ENCODE measurements at regions of chr11 and their contacts with region 1.

Region 1: DNA sequence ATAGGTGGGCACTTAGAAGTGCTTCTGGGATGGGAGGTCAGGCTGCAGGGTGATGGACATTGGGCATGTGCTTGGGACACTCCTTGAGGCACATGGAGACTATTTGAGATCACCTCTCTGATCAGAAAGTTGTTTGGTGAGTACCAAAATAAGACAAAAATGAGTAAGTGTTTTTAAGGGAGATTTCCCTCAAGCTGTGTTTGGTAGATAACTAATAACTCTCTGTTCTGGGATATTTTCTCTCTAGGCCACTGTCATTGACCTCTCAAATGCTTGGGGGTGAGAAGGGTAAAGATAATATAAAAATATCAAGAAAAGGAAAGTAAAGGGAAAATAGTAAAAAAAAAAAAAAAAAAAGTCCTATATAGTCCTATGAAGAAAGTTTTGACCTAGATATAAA is 117.8 kb downstream of the TEAD1 start:
- DNase-seq: no peak
- H3K4me3 ChIP-seq: no peak overlapping the region
- H3K27ac ChIP-seq: no peak overlapping the region
- H3K4me1 ChIP-seq: peaks cover 4% of the 10 kb centered on the region
- H3K27me3 ChIP-seq: no peaks in the 10 kb centered on the region
- CTCF ChIP-seq: no peak

Region 2: GRCh38 chr11:12768726-12769673 is 23.0 kb before region 1 on chr11:
- CTCF ChIA-PET with region 1: no interaction called
- POLR2A ChIA-PET with region 1: interaction called, 10 read pairs
- intact Hi-C with region 1: no loop called
- DNase-seq: no peak
- H3K4me3 ChIP-seq: no peak overlapping the region
- H3K27ac ChIP-seq: peak overlapping the region; percentile 55
- H3K4me1 ChIP-seq: peaks cover 45% of the 10 kb centered on the region
- H3K27me3 ChIP-seq: no peaks in the 10 kb centered on the region
- CTCF ChIP-seq: no peak

Region 3: DNA sequence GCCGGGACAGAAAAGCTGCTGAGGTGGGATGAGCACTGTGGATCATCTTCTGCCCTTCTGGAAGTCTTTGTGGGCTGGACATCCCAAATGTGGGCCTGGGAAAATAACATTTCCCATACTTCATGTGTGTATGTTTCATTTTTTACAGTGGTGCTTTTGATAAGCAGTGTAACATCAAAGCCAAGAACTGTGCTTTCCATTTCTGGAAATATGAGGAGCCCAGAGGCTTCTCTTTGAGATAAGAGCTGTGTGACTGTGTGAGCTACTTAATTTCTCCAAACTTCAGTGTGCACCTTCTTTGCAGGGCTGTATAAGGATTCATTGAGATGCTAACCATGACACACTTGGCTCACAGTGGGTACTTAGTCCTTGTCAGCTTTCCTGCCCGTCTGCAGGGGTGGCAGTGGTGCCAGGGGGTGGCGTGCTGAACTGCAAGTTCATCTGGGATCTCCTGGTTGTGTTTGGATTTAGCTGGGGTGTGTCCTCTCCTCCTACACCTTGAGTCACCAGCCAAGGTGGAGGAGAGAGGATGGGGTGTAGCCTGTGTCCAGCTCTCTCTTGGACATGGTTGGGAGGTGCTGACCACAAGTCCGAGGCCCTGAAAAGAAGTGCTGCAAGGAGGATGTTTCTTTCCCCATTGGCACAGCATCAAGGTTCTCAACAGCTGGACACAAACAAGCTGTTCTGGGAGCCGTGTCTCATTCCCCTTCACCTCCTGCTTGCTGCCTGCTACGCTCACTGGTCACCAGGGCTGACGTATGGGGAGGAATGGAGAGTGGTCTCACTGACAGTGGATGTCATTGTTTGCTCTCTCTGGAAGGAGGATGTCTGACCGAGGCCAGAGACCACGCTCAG is 21.6 kb after region 1 on chr11:
- CTCF ChIA-PET with region 1: no interaction called
- POLR2A ChIA-PET with region 1: no interaction called
- intact Hi-C with region 1: no loop called
- DNase-seq: no peak
- H3K4me3 ChIP-seq: no peak overlapping the region
- H3K27ac ChIP-seq: no peak overlapping the region
- H3K4me1 ChIP-seq: peaks cover 54% of the 10 kb centered on the region
- H3K27me3 ChIP-seq: no peaks in the 10 kb centered on the region
- CTCF ChIP-seq: no peak